ENCODE measurements at regions of chr1 and their contacts with region 1.

Region 1: GRCh38 chr1:233240829-233241682 is 54.5 kb downstream of the PCNX2 start:
- DNase-seq: peak; percentile 54 to 56
- ATAC-seq: peak; percentile 84 to 92 (median 88)
- H3K4me3 ChIP-seq: peak overlapping the region in 3 of 10 donors; percentile 2 to 21 (median 6)
- H3K27ac ChIP-seq: no peak overlapping the region
- H3K4me1 ChIP-seq: peaks cover 0 to 39% (median 9%) of the 10 kb centered on the region in 9 donors
- H3K27me3 ChIP-seq: no peaks in the 10 kb centered on the region
- CTCF ChIP-seq: peak; percentile 61 to 93 (median 84)

Region 2: DNA sequence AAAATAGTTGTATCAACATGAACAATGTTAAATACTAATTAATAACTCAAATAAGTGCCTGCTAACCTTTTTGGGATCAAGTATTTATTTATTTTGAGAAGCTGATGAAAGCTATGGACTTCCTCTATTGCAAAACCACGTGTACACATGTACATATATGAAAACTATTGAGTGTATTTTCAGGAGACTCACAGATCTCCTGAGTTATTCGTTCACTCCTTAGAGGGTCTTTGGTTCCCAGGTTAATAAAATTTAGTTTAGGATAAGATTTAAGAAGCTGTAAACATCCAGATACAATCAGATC is 1484.0 kb before region 1 on chr1:
- intact Hi-C with region 1: loop called in 4 of 10 experiments (anchors 5 to 10 kb)
- DNase-seq: no peak
- ATAC-seq: peak in 5 of 8 donors; percentile 16 to 35 (median 31)
- H3K4me3 ChIP-seq: no peak overlapping the region
- H3K27ac ChIP-seq: no peak overlapping the region
- H3K4me1 ChIP-seq: peaks cover 0 to 6% (median 0%) of the 10 kb centered on the region in 9 donors
- H3K27me3 ChIP-seq: no peaks in the 10 kb centered on the region
- CTCF ChIP-seq: peak in 1 of 9 donors; percentile 28

Region 3: GRCh38 chr1:231853588-231854207 is 1387.4 kb before region 1 on chr1:
- intact Hi-C with region 1: loop called in 1 of 10 experiments (anchors 5 kb)
- DNase-seq: peak in 1 of 2 donors; percentile 44
- ATAC-seq: peak in 7 of 8 donors; percentile 38 to 64 (median 50)
- H3K4me3 ChIP-seq: no peak overlapping the region
- H3K27ac ChIP-seq: peak overlapping the region in 3 of 10 donors; percentile 1 to 32 (median 26)
- H3K4me1 ChIP-seq: peaks cover 4 to 45% (median 24%) of the 10 kb centered on the region in 9 donors
- H3K27me3 ChIP-seq: no peaks in the 10 kb centered on the region
- CTCF ChIP-seq: no peak

Region 4: GRCh38 chr1:232635778-232636356 is 605.2 kb before region 1 on chr1:
- intact Hi-C with region 1: loop called (anchors 1 to 10 kb)
- DNase-seq: no peak
- ATAC-seq: peak in 6 of 8 donors; percentile 53 to 79 (median 70)
- H3K4me3 ChIP-seq: no peak overlapping the region
- H3K27ac ChIP-seq: no peak overlapping the region
- H3K4me1 ChIP-seq: peaks cover 0 to 10% (median 3%) of the 10 kb centered on the region in 9 donors
- H3K27me3 ChIP-seq: no peaks in the 10 kb centered on the region
- CTCF ChIP-seq: peak; percentile 50 to 89 (median 85)

Region 5: DNA sequence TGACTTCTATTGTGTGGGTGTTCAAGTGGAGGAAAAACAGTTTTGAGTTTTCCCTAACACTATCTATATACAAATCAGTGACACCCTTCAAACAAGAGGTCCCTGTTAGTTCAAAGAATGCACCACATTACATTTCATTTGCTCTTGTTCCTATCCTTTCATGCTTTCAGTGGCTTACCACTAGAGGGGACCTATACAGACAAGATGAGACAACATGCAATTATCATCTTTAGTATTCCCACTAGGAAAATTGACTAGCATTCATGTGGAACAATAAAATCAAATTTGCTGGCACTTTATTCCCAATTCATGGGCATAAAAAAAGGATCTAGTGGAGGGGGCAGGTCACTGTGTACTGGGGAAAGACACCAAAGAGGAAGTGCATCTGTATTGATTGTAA is 597.8 kb before region 1 on chr1:
- intact Hi-C with region 1: loop called in 4 of 10 experiments (anchors 5 to 10 kb)
- DNase-seq: no peak
- ATAC-seq: no peak
- H3K4me3 ChIP-seq: no peak overlapping the region
- H3K27ac ChIP-seq: no peak overlapping the region
- H3K4me1 ChIP-seq: no peaks in the 10 kb centered on the region
- H3K27me3 ChIP-seq: no peaks in the 10 kb centered on the region
- CTCF ChIP-seq: peak in 3 of 9 donors; percentile 3 to 14 (median 13)

Region 6: GRCh38 chr1:233025157-233025915 is 215.7 kb before region 1 on chr1:
- intact Hi-C with region 1: loop called in 1 of 10 experiments (anchors 10 kb)
- DNase-seq: peak; percentile 24 to 41
- ATAC-seq: peak in 6 of 8 donors; percentile 38 to 78 (median 59)
- H3K4me3 ChIP-seq: no peak overlapping the region
- H3K27ac ChIP-seq: no peak overlapping the region
- H3K4me1 ChIP-seq: peaks cover 0 to 15% (median 6%) of the 10 kb centered on the region in 9 donors
- H3K27me3 ChIP-seq: no peaks in the 10 kb centered on the region
- CTCF ChIP-seq: peak; percentile 21 to 73 (median 62)

Region 7: DNA sequence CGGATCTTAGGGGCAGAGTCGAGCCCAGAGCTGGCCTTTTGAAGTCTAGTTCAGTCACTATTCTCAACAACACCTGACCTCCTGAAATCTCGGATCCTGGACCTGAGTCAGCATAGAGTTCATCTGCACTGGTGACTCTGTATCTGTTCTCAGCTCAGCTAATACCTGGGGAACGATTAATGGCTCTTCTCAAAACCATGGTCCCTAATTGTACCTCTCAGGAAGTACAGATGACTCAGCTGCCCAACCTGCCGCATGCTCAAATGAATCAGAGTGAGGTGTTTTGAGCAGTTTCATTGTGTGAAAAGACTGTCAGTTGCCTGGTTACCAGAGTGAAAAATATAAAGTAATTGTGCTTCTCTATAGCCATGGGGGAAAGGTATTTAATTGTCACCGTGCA is 752.6 kb after region 1 on chr1:
- intact Hi-C with region 1: no loop called
- DNase-seq: no peak
- ATAC-seq: no peak
- H3K4me3 ChIP-seq: no peak overlapping the region
- H3K27ac ChIP-seq: no peak overlapping the region
- H3K4me1 ChIP-seq: no peaks in the 10 kb centered on the region
- H3K27me3 ChIP-seq: peaks cover 0 to 34% (median 7%) of the 10 kb centered on the region in 7 donors
- CTCF ChIP-seq: no peak

Measured in heart right ventricle (tissue), 16 donors.